ENCODE measurements at regions of chr10 and their contacts with region 1.

Region 1: DNA sequence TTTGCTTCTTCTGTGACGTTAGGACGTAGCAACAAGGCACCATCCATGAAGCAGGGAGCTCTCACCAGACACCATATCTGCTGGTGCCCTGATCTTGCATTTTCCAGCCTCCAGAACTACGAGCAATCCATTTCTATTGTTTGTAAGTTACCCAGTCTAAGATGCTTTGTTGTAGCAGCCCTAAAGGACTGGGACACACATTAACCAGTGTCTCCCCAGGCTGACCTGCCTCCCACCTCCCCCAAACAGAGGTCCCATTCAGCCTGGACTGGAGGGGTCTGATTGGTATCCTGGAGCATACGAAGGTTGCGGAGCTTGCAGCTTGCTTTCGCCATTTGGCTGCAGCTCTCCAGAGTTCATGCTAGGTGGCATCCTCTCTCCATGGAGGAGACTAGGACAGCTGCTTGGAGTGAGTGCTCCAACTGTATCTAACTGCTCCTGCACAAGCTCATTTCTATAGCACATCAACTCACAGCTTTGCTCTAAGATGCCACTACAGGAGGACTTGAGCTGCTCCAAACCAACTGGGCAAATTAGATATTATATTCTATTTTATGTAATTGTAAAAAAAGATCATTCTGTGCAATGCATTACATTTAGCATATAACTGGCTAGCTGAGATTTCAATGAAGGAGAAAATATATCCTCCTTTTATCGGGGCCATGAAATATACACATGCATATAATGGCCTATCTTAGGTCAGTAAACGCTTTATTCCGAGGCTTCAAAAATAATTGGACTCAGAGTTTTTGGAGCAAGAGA is 8.0 kb upstream of the GRK5 start:
- DNase-seq: peak; percentile 88
- ATAC-seq: peak; percentile 96
- H3K4me3 ChIP-seq: peak overlapping the region; percentile 27 to 62 (median 36); a peak in 5 of 6 replicates
- H3K27ac ChIP-seq: no peak overlapping the region
- H3K4me1 ChIP-seq: peaks cover 61% of the 10 kb centered on the region
- H3K27me3 ChIP-seq: no peaks in the 10 kb centered on the region
- CTCF ChIP-seq: peak; percentile 96
- EP300 ChIP-seq: no peak
- POLR2A ChIP-seq: no peak
- RAD21 ChIP-seq: peak; percentile 94

Region 2: DNA sequence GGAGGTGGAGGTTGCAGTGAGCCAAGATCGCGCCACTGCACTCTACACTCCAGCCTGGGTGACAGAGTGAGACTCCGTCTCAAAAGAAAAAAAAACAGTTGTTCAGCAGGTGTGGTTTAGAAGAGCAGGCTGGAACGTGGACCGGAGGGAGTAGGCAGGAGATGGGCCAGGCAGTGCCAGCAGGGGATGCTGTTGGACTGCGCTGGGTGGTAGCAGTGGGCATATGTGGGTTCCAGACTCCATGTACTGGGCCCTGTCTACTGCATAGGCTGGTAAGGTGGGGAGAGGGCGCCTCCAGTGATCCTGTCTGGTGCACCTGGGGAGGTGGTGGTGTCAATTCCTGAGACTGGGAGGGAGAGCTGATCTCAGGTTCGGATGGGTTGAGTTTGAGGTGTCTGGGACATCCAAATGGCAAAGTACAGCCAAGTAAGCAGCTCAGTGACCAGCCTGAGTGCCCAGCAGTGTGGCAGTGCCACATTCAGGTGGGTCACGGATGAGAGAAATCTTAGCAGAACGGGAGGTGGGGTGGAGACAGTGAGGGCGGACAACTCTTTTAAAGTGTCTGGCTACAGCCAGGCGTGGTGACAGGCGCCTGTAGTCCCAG is 59.8 kb before region 1 on chr10:
- CTCF ChIA-PET with region 1: interaction called, 3 read pairs
- POLR2A ChIA-PET with region 1: interaction called, 3 read pairs
- in situ Hi-C with region 1: no loop called
- intact Hi-C with region 1: loop called (anchors 1 kb)
- DNase-seq: peak; percentile 28
- ATAC-seq: peak; percentile 89
- H3K4me3 ChIP-seq: no peak overlapping the region
- H3K27ac ChIP-seq: no peak overlapping the region
- H3K4me1 ChIP-seq: no peaks in the 10 kb centered on the region
- H3K27me3 ChIP-seq: no peaks in the 10 kb centered on the region
- CTCF ChIP-seq: peak; percentile 88
- EP300 ChIP-seq: no peak
- POLR2A ChIP-seq: no peak
- RAD21 ChIP-seq: peak; percentile 75; the same call in 1 of the 2 replicates

Region 3: DNA sequence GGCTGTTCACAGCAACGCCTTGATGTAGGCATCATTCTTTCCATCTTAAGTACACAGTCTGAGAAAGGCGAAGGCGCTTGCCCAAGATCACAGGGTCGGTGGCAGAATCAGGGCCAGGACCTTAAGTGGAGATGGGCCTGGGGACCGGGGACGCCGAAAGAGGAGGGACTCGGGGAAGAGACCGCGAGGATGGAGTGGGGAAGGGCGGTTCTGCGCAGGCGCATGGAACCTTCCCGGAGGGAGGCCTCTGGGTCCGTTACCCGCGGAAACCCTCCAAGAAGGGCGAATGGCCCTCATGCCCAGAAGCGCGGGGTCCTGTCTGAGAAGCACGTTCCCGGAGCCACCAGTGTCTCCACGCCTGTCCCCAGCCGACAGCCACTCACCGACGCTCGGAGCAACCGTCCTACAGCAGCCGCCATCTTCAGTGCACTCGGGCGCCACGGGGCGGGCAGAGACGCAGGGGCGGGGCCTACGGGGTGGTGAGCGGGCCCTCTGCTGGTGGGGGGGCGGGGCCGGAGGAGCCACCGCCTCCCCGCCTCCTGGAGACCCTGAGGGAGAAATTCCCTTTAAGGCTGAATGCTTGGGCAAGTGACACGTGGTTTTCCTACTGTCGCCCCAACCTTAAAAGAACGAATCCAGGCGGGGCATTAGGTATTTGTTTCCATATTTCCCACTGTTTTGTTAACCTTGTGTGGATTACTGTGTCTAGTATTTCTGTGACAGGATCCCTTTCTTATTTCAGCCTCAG is 20.9 kb before region 1 on chr10 and contains the start of gene PRDX3:
- CTCF ChIA-PET with region 1: no interaction called
- POLR2A ChIA-PET with region 1: interaction called, 10 read pairs
- in situ Hi-C with region 1: no loop called
- intact Hi-C with region 1: no loop called
- DNase-seq: peak; percentile 85
- ATAC-seq: peak; percentile 90
- H3K4me3 ChIP-seq: peak within 1 kb of the TSS; percentile 75 to 94 (median 81)
- H3K27ac ChIP-seq: peak within 1 kb of the TSS; percentile 93
- H3K4me1 ChIP-seq: peaks cover 52% of the 10 kb centered on the region
- H3K27me3 ChIP-seq: no peaks in the 10 kb centered on the region; a peak in 1 of 5 replicates
- CTCF ChIP-seq: peak; percentile 44
- EP300 ChIP-seq: no peak
- POLR2A ChIP-seq: peak; percentile 89 to 95
- RAD21 ChIP-seq: no peak
- total RNA-seq, gene PRDX3: 407 and 643 TPM in 2 replicates

Region 4: GRCh38 chr10:119416855-119417254 is 217.4 kb after region 1 on chr10:
- CTCF ChIA-PET with region 1: interaction called, 20 read pairs
- POLR2A ChIA-PET with region 1: interaction called, 3 read pairs
- in situ Hi-C with region 1: loop called (anchors 5 kb)
- intact Hi-C with region 1: loop called (anchors 2 kb)
- DNase-seq: peak; percentile 46
- ATAC-seq: peak; percentile 80
- H3K4me3 ChIP-seq: no peak overlapping the region
- H3K27ac ChIP-seq: no peak overlapping the region
- H3K4me1 ChIP-seq: peaks cover 16% of the 10 kb centered on the region
- H3K27me3 ChIP-seq: no peaks in the 10 kb centered on the region
- CTCF ChIP-seq: peak; percentile 97
- EP300 ChIP-seq: no peak
- POLR2A ChIP-seq: no peak
- RAD21 ChIP-seq: peak; percentile 93

Region 5: GRCh38 chr10:119542988-119543813 is 343.8 kb after region 1 on chr10:
- CTCF ChIA-PET with region 1: no interaction called
- POLR2A ChIA-PET with region 1: no interaction called
- in situ Hi-C with region 1: loop called (anchors 25 kb)
- intact Hi-C with region 1: loop called (anchors 1 kb)
- DNase-seq: peak; percentile 39
- ATAC-seq: peak; percentile 83
- H3K4me3 ChIP-seq: peak overlapping the region; percentile 46 to 71 (median 55)
- H3K27ac ChIP-seq: no peak overlapping the region
- H3K4me1 ChIP-seq: peaks cover 21% of the 10 kb centered on the region
- H3K27me3 ChIP-seq: peaks cover 6 to 43% of the 10 kb centered on the region in 2 experiments; a peak in 4 of 5 replicates
- CTCF ChIP-seq: peak; percentile 61
- EP300 ChIP-seq: no peak
- POLR2A ChIP-seq: no peak
- RAD21 ChIP-seq: peak; percentile 52

Region 6: DNA sequence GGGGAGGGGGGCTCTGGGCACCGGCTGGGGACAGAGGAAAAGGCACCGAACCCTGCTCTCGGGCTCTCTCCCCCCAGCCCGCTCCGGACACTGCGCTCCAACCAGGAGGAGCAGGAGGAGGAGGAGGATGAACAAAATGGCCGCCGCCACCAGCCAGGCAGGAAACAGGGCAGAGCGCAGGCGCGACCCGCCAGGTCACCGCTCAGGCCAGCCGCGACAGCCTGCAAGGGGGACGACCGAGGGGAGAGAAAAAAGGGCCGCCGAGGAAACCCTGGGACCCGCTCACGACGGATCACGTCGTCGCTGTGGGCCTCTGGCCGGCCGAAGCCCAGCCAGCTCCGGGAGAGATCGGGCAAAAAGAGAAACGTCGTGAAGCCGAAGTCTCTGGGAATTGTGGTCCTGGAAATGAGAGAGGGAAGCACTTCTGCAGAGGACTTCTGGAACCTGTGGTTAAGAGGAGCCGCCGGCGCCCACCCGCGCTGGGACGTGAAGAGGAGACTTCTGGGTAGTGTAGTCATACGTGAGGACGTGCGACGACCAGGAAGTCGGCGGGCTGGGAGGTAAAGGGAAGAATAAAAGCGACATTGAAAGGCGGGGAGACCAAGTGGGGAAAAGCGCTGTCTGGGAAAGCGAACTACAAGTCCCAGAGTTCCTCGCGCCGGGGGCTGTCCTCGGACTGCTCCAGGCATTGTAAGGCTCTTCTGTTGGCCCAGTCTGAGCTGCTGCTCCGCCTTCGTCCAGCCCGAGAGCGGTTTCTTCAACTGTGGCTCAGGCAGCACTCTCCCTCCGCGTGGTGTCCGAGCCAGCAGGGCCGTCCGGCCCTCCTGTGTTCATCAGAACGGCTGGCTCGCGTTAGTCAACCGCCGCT is 397.4 kb after region 1 on chr10 and contains the start of gene TIAL1:
- CTCF ChIA-PET with region 1: no interaction called
- POLR2A ChIA-PET with region 1: no interaction called
- in situ Hi-C with region 1: no loop called
- intact Hi-C with region 1: no loop called
- DNase-seq: peak; percentile 99
- ATAC-seq: peak; percentile 96
- H3K4me3 ChIP-seq: peak within 1 kb of the TSS; percentile 89 to 90 (median 90)
- H3K27ac ChIP-seq: peak within 1 kb of the TSS; percentile 98
- H3K4me1 ChIP-seq: peaks cover 45% of the 10 kb centered on the region
- H3K27me3 ChIP-seq: no peaks in the 10 kb centered on the region; a peak in 1 of 5 replicates
- CTCF ChIP-seq: 0 out of 2 replicates have a peak, but pooled peaks have one; percentile 14
- EP300 ChIP-seq: peak; percentile 10 to 11; a peak in 1 of 4 replicates
- POLR2A ChIP-seq: peak; percentile 79 to 96
- RAD21 ChIP-seq: no peak; the same call in 1 of the 2 replicates
- total RNA-seq, gene TIAL1: 31.5 and 36.6 TPM in 2 replicates

Measured in HepG2 (cell line).